ENCODE measurements at regions of chrX and their contacts with region 1.

Region 1: DNA sequence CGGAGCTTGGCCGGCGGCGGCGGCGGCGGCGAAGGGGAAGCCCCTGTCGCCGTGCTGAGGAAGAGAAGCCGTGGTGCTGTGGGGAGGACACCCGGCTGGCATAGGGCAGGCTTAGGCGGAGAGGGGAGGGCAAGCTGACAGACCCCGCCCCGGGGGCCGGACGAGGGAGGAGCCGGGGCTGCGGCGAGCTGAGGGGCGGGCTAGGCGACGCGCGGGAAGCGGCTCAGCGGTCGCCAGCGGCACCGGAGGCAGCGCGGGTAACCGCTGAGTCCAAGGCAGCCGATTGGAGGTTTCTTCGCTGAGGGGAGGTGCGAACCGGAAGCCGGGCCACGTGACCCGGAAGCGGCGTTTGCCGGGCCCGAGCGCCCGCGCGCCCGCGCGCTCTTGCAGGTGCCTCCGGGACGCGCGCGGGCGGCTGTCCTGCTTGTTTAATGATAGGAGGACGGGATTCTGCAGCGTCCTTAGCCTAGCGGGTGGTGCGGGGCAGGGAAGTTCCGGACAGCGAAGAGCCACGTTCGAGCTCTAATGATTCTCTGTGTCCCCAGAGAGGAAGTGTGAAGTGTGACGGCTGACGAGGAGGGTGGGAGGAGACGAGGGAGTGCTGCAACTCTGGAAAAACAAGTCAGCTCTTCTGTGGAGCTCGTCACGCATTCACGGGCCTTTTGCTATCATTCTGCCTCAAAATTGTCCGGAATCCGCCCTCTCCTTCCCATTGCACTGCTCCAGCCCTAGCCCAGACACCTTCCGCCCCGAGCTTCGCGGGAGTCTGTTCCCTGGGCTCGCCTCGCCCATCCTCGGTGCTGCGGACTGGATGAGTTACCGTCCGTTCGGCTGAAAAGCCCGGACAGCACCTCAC is at the start of gene AP1S2:
- DNase-seq: peak; percentile 90
- H3K4me3 Mint-ChIP-seq: peak within 1 kb of the TSS; percentile 86
- H3K27ac Mint-ChIP-seq: peak within 1 kb of the TSS; percentile 90
- H3K4me1 Mint-ChIP-seq: peaks cover 18% of the 10 kb centered on the region
- H3K27me3 Mint-ChIP-seq: no peaks in the 10 kb centered on the region
- total RNA-seq, gene AP1S2: 33.8 and 35.5 TPM in 2 replicates

Region 2: GRCh38 chrX:15737960-15738902 is 116.7 kb before region 1 on chrX and contains the start of gene CA5B:
- intact Hi-C with region 1: loop called (anchors 1 kb)
- DNase-seq: peak; percentile 94
- H3K4me3 Mint-ChIP-seq: peak within 1 kb of the TSS; percentile 82
- H3K27ac Mint-ChIP-seq: peak within 1 kb of the TSS; percentile 75
- H3K4me1 Mint-ChIP-seq: peaks cover 23% of the 10 kb centered on the region
- H3K27me3 Mint-ChIP-seq: no peaks in the 10 kb centered on the region
- total RNA-seq, gene CA5B: 5.2 and 8.0 TPM in 2 replicates

Region 3: DNA sequence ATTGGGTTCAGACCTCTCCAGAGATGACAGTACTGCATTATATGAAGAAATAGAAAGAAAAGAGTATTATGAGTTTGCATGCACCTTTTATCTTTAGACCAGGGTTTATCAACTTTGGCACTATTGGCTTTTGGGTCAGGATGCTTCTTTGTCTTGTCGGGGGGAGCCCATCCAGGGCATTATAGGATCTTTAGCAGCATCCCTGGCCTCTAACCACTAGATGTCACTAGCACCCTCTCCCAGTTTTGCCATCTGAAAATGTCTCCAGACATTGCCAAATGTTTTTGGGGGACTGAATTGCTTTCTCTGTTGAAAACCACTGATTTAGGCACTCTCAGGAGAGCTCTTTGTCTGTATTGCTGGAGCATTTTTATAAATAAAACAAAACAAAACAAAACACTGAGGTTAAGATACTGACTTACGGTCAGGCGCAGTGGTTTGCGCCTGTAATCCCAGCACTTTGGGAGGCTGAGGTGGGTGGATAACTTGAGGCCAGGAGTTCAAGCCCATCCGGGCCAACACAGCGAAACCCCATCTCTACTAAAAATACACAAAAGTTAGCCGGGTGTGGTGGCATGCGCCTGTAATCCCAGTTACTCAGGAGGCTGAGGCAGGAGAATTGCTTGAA is 93.3 kb before region 1 on chrX:
- intact Hi-C with region 1: loop called (anchors 10 kb)
- DNase-seq: no peak
- H3K4me3 Mint-ChIP-seq: no peak overlapping the region
- H3K27ac Mint-ChIP-seq: peak overlapping the region; percentile 77
- H3K4me1 Mint-ChIP-seq: peaks cover 26% of the 10 kb centered on the region
- H3K27me3 Mint-ChIP-seq: no peaks in the 10 kb centered on the region

Region 4: GRCh38 chrX:15789979-15790768 is 64.8 kb before region 1 on chrX and contains the start of gene ZRSR2:
- intact Hi-C with region 1: loop called (anchors 2 kb)
- DNase-seq: peak; percentile 83
- H3K4me3 Mint-ChIP-seq: no peak within 1 kb of the TSS
- H3K27ac Mint-ChIP-seq: no peak within 1 kb of the TSS
- H3K4me1 Mint-ChIP-seq: peaks cover 12% of the 10 kb centered on the region
- H3K27me3 Mint-ChIP-seq: no peaks in the 10 kb centered on the region
- total RNA-seq, gene ZRSR2: 18.7 and 20.3 TPM in 2 replicates

Region 5: GRCh38 chrX:15815779-15816437 is 39.0 kb before region 1 on chrX:
- intact Hi-C with region 1: loop called (anchors 2 kb)
- DNase-seq: peak; percentile 15
- H3K4me3 Mint-ChIP-seq: no peak overlapping the region
- H3K27ac Mint-ChIP-seq: peak overlapping the region; percentile 92
- H3K4me1 Mint-ChIP-seq: peaks cover 41% of the 10 kb centered on the region
- H3K27me3 Mint-ChIP-seq: no peaks in the 10 kb centered on the region

Region 6: GRCh38 chrX:15903186-15903681 is 48.3 kb after region 1 on chrX:
- intact Hi-C with region 1: no loop called
- DNase-seq: no peak
- H3K4me3 Mint-ChIP-seq: no peak overlapping the region
- H3K27ac Mint-ChIP-seq: no peak overlapping the region
- H3K4me1 Mint-ChIP-seq: no peaks in the 10 kb centered on the region
- H3K27me3 Mint-ChIP-seq: no peaks in the 10 kb centered on the region

Region 7: DNA sequence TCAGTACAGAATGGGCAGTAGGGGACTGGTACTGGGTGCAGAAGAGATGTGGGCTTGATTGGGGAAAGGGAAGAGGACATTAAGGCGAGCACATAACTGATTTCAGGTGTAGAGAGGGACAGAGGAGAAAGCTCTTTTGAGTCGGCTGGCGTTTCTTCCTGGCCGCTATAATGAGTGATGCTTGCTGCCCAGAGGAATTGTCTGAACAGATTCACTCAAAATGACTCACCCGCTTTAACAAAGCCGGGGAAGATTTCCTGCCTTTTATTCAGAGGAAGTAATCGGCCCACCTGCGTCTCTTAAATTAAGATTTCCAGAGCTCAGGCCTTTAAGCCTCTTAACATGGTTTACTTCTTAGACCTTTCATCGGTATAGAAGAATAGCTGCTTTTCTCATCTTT is 101.7 kb after region 1 on chrX:
- intact Hi-C with region 1: no loop called
- DNase-seq: no peak
- H3K4me3 Mint-ChIP-seq: no peak overlapping the region
- H3K27ac Mint-ChIP-seq: no peak overlapping the region
- H3K4me1 Mint-ChIP-seq: no peaks in the 10 kb centered on the region
- H3K27me3 Mint-ChIP-seq: peaks cover 2% of the 10 kb centered on the region

Region 8: GRCh38 chrX:16376056-16376455 is 521.1 kb after region 1 on chrX:
- intact Hi-C with region 1: no loop called
- DNase-seq: no peak
- H3K4me3 Mint-ChIP-seq: no peak overlapping the region
- H3K27ac Mint-ChIP-seq: no peak overlapping the region
- H3K4me1 Mint-ChIP-seq: no peaks in the 10 kb centered on the region
- H3K27me3 Mint-ChIP-seq: no peaks in the 10 kb centered on the region